ENCODE measurements at regions of chr3 and their contacts with region 1.

Region 1: GRCh38 chr3:14791343-14791945 is 27.3 kb upstream of the FGD5 start:
- DNase-seq: peak in 2 of 3 donors; percentile 72 to 79
- ATAC-seq: peak; percentile 87
- H3K4me3 ChIP-seq: no peak overlapping the region
- H3K4me1 ChIP-seq: no peaks in the 10 kb centered on the region
- CTCF ChIP-seq: peak; percentile 54

Region 2: GRCh38 chr3:14915636-14916222 is 124.3 kb after region 1 on chr3:
- intact Hi-C with region 1: loop called in 1 of 2 experiments (anchors 10 kb)
- DNase-seq: peak in 1 of 3 donors; percentile 47
- ATAC-seq: peak; percentile 35
- H3K4me3 ChIP-seq: no peak overlapping the region
- H3K4me1 ChIP-seq: no peaks in the 10 kb centered on the region
- CTCF ChIP-seq: no peak